Prostate gland (tissue), 2 donors: ENCODE measurements at regions of chr11 and their contacts with region 1.

Region 1: GRCh38 chr11:112302231-112302732 is 41.6 kb upstream of the PLET1 start:
- DNase-seq: no peak
- H3K4me3 ChIP-seq: no peak overlapping the region
- H3K27ac ChIP-seq: no peak overlapping the region
- H3K4me1 ChIP-seq: no peaks in the 10 kb centered on the region
- H3K27me3 ChIP-seq: no peaks in the 10 kb centered on the region
- CTCF ChIP-seq: no peak
- POLR2A ChIP-seq: no peak

Region 2: GRCh38 chr11:112364962-112365481 is 62.7 kb after region 1 on chr11:
- intact Hi-C with region 1: loop called (anchors 5 kb)
- DNase-seq: peak; percentile 20
- H3K4me3 ChIP-seq: no peak overlapping the region
- H3K27ac ChIP-seq: peak overlapping the region; percentile 56 to 64
- H3K4me1 ChIP-seq: no peaks in the 10 kb centered on the region
- H3K27me3 ChIP-seq: no peaks in the 10 kb centered on the region
- CTCF ChIP-seq: no peak
- POLR2A ChIP-seq: no peak